ENCODE measurements at regions of chr2 and their contacts with region 1.

Region 1: DNA sequence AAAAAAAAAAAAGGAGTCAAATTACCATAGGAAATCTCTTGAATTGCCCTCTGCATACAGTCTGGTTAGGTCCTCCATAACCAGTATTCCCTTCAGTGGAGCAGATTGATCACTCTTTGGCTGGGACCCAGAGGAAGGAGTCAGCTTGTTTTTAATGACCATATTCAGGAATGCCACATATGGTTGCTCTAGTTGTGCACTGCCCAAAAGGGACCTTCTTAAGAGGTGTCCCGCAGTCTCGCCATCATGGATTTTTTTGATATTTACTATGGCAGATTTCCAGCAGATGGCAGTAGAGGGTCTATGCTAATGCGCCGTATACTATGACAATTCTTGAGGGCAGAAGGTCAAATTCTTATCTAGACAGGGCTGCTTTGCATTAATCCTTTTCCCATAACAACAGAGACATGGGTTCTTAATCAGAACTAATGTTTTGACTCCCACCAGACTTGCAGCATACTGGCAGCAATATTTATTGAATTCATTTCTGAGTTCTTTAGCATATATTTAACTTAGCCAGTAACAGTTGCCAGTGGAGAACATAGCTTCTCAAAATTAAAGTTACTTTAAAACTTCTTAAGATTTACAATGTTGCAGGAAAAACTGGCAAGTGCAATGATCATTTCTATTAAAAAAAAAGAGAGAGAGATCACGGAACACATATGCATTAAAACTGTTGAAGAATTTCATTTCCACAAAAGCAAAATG is 31.8 kb upstream of the INPP4A start:
- DNase-seq: no peak
- H3K4me3 ChIP-seq: no peak overlapping the region
- H3K27ac ChIP-seq: no peak overlapping the region
- H3K4me1 ChIP-seq: no peaks in the 10 kb centered on the region
- H3K27me3 ChIP-seq: no peaks in the 10 kb centered on the region
- CTCF ChIP-seq: peak; percentile 9 to 14 (median 12)
- EP300 ChIP-seq: no peak
- POLR2A ChIP-seq: no peak

Region 2: GRCh38 chr2:98524168-98524567 is 111.3 kb after region 1 on chr2:
- intact Hi-C with region 1: no loop called
- DNase-seq: no peak
- H3K4me3 ChIP-seq: no peak overlapping the region
- H3K27ac ChIP-seq: no peak overlapping the region
- H3K4me1 ChIP-seq: peaks cover 3% of the 10 kb centered on the region
- H3K27me3 ChIP-seq: no peaks in the 10 kb centered on the region
- CTCF ChIP-seq: no peak
- EP300 ChIP-seq: no peak
- POLR2A ChIP-seq: no peak

Region 3: DNA sequence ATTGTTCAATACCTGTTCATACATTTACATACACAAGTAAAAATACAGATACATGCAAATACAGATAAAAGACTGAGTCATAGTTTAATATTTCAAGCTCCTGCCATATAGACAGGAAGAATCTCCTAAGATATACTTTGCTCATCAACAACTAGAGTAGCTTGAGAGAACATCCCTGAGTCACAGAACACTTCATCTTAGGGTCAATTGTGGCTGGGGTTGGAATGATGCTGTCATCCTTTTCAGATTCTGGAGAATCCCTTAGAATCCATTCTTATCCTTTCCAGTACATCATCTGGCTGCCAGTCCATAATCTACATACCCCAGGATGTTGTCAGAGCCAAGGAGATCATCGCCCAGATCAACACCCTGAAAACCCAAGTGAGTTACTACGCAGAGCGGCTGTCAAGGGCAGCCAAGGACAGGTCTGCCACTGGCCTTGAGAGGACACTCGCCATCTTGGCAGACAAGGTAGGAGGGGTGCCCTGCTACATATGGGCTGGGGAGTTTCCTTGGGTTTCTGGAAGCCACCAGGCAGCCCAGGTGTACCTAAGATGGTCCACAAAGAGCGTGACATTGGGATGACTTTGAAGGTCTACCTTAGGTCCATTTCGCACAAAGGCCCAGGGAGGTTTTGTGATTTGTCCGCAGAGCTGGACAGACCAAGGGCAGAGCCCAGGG is 139.7 kb after region 1 on chr2:
- intact Hi-C with region 1: no loop called
- DNase-seq: no peak
- H3K4me3 ChIP-seq: no peak overlapping the region
- H3K27ac ChIP-seq: no peak overlapping the region
- H3K4me1 ChIP-seq: no peaks in the 10 kb centered on the region
- H3K27me3 ChIP-seq: no peaks in the 10 kb centered on the region
- CTCF ChIP-seq: no peak
- EP300 ChIP-seq: no peak
- POLR2A ChIP-seq: no peak

Region 4: DNA sequence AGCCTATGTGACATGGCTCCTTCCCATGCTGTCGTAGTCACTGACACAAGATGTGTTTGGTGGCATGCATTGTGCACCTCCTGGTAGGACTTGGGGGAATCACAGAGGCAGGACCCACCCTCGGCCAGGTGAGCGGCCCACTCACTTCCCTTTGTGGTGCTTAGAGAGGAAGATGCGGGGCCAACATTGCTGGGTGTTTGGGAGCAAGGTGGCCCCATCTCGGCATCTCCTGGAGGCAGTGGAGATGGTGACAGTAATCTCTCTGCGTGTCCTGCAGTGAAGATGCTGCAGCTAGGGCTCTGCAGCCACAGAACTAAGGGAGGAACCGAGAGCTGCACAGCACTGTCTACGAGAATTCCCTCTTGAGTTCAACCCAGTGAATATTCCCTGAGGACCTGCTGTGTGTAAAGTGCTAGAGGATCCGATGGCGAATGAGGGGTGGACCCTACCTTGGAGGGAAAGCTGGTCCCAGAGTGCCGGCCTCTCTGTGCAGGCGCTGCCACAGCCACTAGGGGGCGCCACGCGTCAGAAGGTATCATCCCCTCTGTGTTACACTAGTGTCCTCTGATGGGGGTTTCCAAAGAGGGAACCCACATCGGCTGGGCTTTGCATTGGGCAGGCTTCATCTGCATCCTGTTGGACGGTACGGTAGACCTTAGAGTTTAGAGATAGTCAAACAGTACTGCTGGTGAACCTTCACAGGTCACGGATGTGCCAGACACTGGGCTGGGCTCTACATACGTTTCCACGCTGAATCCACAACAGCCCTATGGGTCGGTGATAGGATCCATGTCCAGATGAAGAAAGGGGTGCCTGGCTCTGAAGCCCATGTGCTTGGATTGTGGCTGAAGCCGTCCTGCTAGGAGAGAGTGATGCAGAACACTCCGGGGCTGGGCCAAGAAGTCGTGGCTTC is 156.2 kb after region 1 on chr2:
- intact Hi-C with region 1: loop called in 1 of 4 experiments (anchors 10 kb)
- DNase-seq: peak in 3 of 5 donors; percentile 45 to 58 (median 52)
- H3K4me3 ChIP-seq: no peak overlapping the region
- H3K27ac ChIP-seq: no peak overlapping the region
- H3K4me1 ChIP-seq: no peaks in the 10 kb centered on the region
- H3K27me3 ChIP-seq: no peaks in the 10 kb centered on the region
- CTCF ChIP-seq: peak in 2 of 3 donors; percentile 17 to 30
- EP300 ChIP-seq: no peak
- POLR2A ChIP-seq: no peak

Region 5: GRCh38 chr2:98649135-98649991 is 236.5 kb after region 1 on chr2:
- intact Hi-C with region 1: no loop called
- DNase-seq: peak; percentile 39 to 77 (median 69)
- H3K4me3 ChIP-seq: no peak overlapping the region
- H3K27ac ChIP-seq: no peak overlapping the region
- H3K4me1 ChIP-seq: no peaks in the 10 kb centered on the region
- H3K27me3 ChIP-seq: no peaks in the 10 kb centered on the region
- CTCF ChIP-seq: peak; percentile 77 to 87 (median 84)
- EP300 ChIP-seq: no peak
- POLR2A ChIP-seq: no peak